Activated CD4-positive, alpha-beta memory T cell treated with anti-CD3 and anti-CD28 coated beads, Interleukin-2, amount 10 ng/mL, durations not matched to agents 7 days and 5 days (primary cell): ENCODE measurements at regions of chr18 and their contacts with region 1.

Region 1: GRCh38 chr18:42028247-42028832 is 73.3 kb downstream of the PIK3C3 start:
- DNase-seq: peak; percentile 30
- H3K4me3 Mint-ChIP-seq: no peak overlapping the region
- H3K27ac Mint-ChIP-seq: no peak overlapping the region
- H3K4me1 Mint-ChIP-seq: peaks cover 38% of the 10 kb centered on the region
- H3K27me3 Mint-ChIP-seq: no peaks in the 10 kb centered on the region

Region 2: GRCh38 chr18:42011053-42011452 is 17.3 kb before region 1 on chr18:
- CTCF ChIA-PET with region 1: interaction called, 61 read pairs
- POLR2A ChIA-PET with region 1: no interaction called
- DNase-seq: no peak
- H3K4me3 Mint-ChIP-seq: no peak overlapping the region
- H3K27ac Mint-ChIP-seq: no peak overlapping the region
- H3K4me1 Mint-ChIP-seq: peaks cover 14% of the 10 kb centered on the region
- H3K27me3 Mint-ChIP-seq: no peaks in the 10 kb centered on the region

Region 3: GRCh38 chr18:42038936-42039335 is 10.6 kb after region 1 on chr18:
- CTCF ChIA-PET with region 1: interaction called, 18 read pairs
- POLR2A ChIA-PET with region 1: no interaction called
- DNase-seq: no peak
- H3K4me3 Mint-ChIP-seq: no peak overlapping the region
- H3K27ac Mint-ChIP-seq: no peak overlapping the region
- H3K4me1 Mint-ChIP-seq: peaks cover 8% of the 10 kb centered on the region
- H3K27me3 Mint-ChIP-seq: no peaks in the 10 kb centered on the region

Region 4: GRCh38 chr18:42053188-42053781 is 24.9 kb after region 1 on chr18:
- CTCF ChIA-PET with region 1: interaction called, 12 read pairs
- POLR2A ChIA-PET with region 1: no interaction called
- DNase-seq: peak; percentile 65
- H3K4me3 Mint-ChIP-seq: no peak overlapping the region
- H3K27ac Mint-ChIP-seq: peak overlapping the region; percentile 4
- H3K4me1 Mint-ChIP-seq: peaks cover 11% of the 10 kb centered on the region
- H3K27me3 Mint-ChIP-seq: no peaks in the 10 kb centered on the region

Region 5: DNA sequence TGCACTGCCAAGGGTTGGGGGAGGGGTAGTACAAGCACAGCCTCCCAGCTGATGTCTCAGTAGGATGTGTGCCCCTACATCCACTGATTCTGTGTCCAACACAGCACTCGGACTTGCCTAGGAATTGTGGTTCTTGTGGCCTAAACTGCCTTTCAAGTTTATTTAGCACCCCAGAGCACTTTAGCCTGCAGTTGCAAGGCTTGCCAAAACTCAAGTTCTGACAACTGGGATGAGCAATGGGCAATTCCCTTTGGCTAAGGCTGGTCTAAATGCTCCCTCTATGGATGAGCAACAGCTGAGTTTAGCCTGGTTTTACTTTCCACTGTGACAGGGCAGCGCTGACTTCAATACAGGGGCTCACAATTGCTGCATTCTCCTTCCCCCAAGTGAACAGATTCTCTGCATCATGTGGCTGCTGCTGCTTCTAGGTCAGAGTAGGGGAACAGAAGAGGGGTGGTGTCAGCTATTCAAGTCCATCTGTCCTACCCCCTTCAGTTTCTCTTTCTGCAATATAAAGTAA is 398.2 kb after region 1 on chr18:
- CTCF ChIA-PET with region 1: no interaction called
- POLR2A ChIA-PET with region 1: no interaction called
- DNase-seq: no peak
- H3K4me3 Mint-ChIP-seq: no peak overlapping the region
- H3K27ac Mint-ChIP-seq: no peak overlapping the region
- H3K4me1 Mint-ChIP-seq: no peaks in the 10 kb centered on the region
- H3K27me3 Mint-ChIP-seq: no peaks in the 10 kb centered on the region